Activated T-helper 1 cell treated with anti-CD3 and anti-CD28 coated beads, Interleukin-12 subunit alpha, Interleukin-12 subunit beta, Interleukin-2, Interleukin-4 antibody, amounts not matched to agents 30 ng/mL and 10 ng/mL and 1 ng/mL, durations not matched to agents 14 hours and 24 hours and 36 hours (primary cell): ENCODE measurements at regions of chr10 and their contacts with region 1.

Region 1: DNA sequence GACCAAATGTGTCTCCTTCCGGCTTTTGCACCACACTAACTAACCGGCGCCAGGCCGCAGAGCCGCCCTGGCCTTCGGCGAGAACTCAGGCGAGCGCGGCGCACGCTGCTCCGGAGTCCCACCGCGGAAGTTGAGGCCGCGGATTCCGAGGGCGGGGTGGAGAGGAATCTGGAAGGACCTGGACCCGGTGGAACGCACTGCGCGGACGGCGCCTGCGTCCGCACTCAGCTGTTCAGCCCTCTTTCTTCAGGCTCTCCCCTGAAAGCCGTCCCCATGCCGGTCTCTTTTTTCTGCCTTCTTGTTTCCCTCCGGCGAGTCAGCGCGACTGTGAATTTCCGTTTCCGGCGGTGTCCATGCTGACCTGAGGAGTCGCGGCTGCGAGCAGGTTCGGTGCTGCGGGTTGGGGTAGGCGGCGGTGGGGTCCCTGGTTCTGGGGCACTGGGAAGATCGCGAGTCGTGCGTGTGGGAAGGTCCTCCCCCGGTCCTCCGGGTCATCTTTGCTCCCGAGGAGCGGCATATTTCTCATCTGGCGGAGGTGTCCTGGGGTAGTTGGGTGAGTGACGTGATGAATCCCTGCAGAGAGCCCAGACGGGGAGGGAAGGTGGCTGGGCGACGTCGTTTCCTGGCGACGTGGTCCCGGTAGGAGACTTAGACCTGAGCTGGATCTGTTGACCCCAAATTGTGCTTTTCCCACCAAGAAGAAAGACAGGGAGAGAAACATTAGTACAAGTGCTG is at the start of gene BMS1:
- DNase-seq: peak; percentile 88
- H3K4me3 Mint-ChIP-seq: peak within 1 kb of the TSS; percentile 99
- H3K27ac Mint-ChIP-seq: peak within 1 kb of the TSS; percentile 100
- H3K4me1 Mint-ChIP-seq: peaks cover 17% of the 10 kb centered on the region
- H3K27me3 Mint-ChIP-seq: peaks cover 1% of the 10 kb centered on the region
- total RNA-seq, gene BMS1: 35.6 and 36.5 TPM in 2 replicates

Region 2: GRCh38 chr10:42638055-42638820 is 144.4 kb before region 1 on chr10 and contains the start of gene ZNF33B:
- intact Hi-C with region 1: loop called (anchors 1 kb)
- DNase-seq: peak; percentile 94
- H3K4me3 Mint-ChIP-seq: peak within 1 kb of the TSS; percentile 98
- H3K27ac Mint-ChIP-seq: peak within 1 kb of the TSS; percentile 98
- H3K4me1 Mint-ChIP-seq: peaks cover 21% of the 10 kb centered on the region
- H3K27me3 Mint-ChIP-seq: peaks cover 1% of the 10 kb centered on the region
- total RNA-seq, gene ZNF33B: 7.6 and 7.9 TPM in 2 replicates

Region 3: DNA sequence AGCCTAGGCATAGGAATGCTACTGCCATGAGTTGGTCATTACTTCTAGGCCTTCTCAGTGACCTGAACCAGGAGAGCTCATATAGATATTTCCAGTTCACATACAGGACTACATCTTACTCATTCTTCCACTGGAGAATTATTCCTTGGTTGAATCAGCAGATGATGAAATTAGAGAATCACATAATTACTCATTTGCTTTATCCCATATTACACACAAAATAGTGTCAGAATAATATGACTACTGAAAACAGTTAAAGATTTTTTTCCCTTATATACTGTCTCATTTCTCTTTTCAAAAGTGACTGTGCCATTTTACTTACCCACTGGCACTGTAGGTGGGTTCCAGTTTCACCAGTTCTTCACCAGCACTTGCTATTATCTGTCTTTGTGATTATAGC is 18.5 kb after region 1 on chr10:
- intact Hi-C with region 1: loop called (anchors 2 kb)
- DNase-seq: no peak
- H3K4me3 Mint-ChIP-seq: no peak overlapping the region
- H3K27ac Mint-ChIP-seq: peak overlapping the region; percentile 58
- H3K4me1 Mint-ChIP-seq: peaks cover 12% of the 10 kb centered on the region
- H3K27me3 Mint-ChIP-seq: no peaks in the 10 kb centered on the region

Region 4: DNA sequence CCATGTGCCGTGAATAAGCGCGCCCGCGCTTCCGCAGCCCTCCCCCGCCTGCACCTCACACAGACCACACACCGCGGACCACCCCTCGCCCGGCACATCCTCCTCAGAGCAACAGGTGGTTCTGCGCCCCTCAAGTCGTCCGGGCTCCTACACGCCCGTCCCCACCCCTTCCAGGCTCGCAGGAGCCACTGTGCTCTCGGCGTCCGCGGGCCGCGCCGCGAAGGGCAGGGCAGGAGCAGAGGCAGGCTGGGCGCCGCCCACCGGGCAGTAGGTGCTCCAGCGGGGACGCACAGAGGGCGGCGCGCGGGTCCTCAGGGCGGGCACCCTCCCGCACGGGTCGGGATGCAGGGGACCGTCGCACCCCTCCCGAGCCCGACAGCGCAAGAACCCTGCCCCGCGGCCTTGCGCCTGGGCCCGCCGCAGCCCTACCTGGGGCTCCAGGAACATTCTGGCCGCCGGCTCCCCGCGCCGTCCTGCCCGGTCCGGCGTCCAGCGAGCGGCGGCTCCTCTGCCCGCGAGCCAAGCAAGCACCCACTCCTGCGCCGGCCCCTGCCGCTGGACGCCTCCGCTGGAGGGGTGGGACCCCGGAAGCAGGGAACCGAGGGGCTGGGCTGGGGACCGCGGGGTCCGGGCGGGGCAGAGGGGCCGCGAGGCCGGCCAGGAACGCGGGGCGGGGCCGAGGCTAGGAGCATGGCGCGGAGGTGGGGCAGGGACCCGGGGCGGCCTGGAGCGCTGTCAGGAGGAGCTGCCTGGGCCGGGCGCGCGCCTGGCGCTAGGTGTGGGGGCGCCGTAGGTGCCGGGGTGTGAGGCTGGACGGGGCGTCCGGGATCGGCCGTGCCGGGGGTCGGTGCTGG is 446.8 kb after region 1 on chr10:
- intact Hi-C with region 1: no loop called
- DNase-seq: peak; percentile 19
- H3K4me3 Mint-ChIP-seq: peak overlapping the region; percentile 69
- H3K27ac Mint-ChIP-seq: no peak overlapping the region
- H3K4me1 Mint-ChIP-seq: peaks cover 21% of the 10 kb centered on the region
- H3K27me3 Mint-ChIP-seq: peaks cover 48% of the 10 kb centered on the region

Region 5: DNA sequence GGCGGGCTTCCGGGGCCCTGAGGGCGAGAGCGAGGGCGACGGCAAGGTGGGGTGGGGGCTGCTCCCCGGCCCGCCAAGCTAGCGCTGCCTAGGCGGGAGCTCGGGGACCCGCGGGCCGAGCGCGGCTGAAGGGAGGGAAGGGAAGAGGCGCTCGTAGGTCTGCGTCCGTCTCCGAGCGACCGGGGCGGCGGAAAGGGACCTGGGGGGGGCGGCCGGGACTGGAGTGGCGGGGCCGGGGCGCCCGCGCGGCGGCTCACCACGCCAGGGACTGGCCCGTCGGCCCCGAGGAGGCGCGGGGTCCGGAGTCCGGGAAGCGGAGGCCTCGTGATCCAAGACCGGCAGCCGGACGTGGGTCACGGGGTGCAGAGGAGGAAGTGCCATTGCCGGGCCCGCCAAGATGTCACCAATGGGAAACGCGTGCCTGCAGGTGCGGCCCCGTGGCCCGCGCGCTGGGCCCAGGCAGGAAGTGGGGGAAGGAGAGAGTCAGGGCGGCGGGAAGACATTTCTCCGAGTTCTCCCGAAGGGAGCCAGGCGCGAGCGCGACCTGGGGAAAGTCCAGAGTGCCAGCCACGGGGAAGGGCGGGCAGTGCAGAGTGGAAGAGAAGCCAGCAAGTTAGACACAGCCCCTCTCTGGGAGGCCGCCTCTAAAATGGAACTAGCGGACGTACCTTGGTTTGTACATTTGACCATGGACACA is 614.5 kb after region 1 on chr10:
- intact Hi-C with region 1: loop called (anchors 10 kb)
- DNase-seq: peak; percentile 81
- H3K4me3 Mint-ChIP-seq: peak overlapping the region; percentile 90
- H3K27ac Mint-ChIP-seq: peak overlapping the region; percentile 94
- H3K4me1 Mint-ChIP-seq: peaks cover 83% of the 10 kb centered on the region
- H3K27me3 Mint-ChIP-seq: no peaks in the 10 kb centered on the region

Region 6: GRCh38 chr10:43648398-43649184 is 866.0 kb after region 1 on chr10 and contains the start of gene ZNF32:
- intact Hi-C with region 1: loop called (anchors 1 kb)
- DNase-seq: peak; percentile 78
- H3K4me3 Mint-ChIP-seq: peak within 1 kb of the TSS; percentile 89
- H3K27ac Mint-ChIP-seq: peak within 1 kb of the TSS; percentile 90
- H3K4me1 Mint-ChIP-seq: peaks cover 11% of the 10 kb centered on the region
- H3K27me3 Mint-ChIP-seq: peaks cover 11% of the 10 kb centered on the region
- total RNA-seq, gene ZNF32: 13.2 and 13.7 TPM in 2 replicates